Calu3 (cell line): ENCODE measurements at regions of chr1 and their contacts with region 1.

Region 1: DNA sequence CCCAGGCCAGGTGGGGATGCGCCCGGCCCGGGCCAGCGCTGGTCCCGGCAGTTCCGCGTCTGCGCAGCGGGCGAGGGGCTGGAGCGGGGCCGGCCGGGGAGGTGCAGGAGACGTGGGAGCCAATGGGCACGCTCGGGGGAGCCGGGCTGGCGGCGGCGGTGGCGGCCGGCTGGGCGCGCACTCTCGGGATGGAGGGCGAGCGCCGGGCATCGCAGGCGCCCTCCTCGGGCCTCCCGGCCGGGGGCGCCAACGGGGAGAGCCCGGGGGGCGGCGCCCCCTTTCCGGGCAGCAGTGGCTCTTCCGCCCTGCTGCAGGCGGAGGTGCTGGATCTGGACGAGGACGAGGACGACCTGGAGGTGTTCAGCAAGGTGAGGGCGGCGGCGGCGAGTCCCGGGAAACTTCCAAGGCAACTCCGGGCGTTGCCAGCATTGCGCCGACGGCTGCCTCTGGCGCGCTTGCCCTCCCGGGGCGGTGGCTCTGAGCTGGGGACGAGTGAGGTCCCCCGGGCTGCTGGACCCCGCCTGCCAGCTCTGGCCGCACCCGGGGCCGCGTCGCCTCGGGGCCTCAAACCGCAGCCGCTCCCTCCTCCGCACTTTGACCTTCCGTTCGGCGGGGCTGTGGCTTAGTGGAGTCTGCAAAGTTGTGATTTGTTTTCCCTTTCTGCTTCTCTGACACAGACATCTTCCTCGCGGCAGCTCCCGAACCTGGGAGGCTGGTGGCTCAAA is at the start of gene SNX7:
- DNase-seq: peak; percentile 84
- H3K4me3 Mint-ChIP-seq: peak within 1 kb of the TSS; percentile 80
- H3K27ac Mint-ChIP-seq: peak within 1 kb of the TSS; percentile 80
- H3K4me1 Mint-ChIP-seq: no peaks in the 10 kb centered on the region
- H3K27me3 Mint-ChIP-seq: no peaks in the 10 kb centered on the region
- CTCF ChIP-seq: peak; percentile 19
- total RNA-seq, gene SNX7: 22.2 and 22.8 TPM in 2 replicates

Region 2: DNA sequence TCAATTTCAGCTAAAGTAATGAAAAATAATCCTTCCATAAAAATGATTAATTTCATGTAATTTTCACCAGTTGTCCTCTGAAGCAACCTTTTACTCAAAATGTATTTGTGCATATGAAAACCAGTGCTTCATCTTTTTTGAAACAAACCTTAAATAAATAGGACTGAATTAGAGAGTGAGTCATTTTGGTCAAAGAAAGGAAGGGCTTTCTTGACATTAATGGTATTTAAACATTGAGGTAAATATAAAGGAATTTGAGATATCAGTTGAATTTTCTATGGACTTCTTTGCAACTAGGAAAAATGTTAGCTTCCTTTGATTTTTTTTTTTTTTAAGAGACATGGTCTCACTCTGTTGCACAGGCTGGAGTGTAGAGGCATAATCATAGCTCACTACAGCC is 38.5 kb after region 1 on chr1:
- CTCF ChIA-PET with region 1: no interaction called
- intact Hi-C with region 1: loop called (anchors 1 kb)
- DNase-seq: no peak
- H3K4me3 Mint-ChIP-seq: no peak overlapping the region
- H3K27ac Mint-ChIP-seq: no peak overlapping the region
- H3K4me1 Mint-ChIP-seq: no peaks in the 10 kb centered on the region
- H3K27me3 Mint-ChIP-seq: no peaks in the 10 kb centered on the region
- CTCF ChIP-seq: no peak

Region 3: DNA sequence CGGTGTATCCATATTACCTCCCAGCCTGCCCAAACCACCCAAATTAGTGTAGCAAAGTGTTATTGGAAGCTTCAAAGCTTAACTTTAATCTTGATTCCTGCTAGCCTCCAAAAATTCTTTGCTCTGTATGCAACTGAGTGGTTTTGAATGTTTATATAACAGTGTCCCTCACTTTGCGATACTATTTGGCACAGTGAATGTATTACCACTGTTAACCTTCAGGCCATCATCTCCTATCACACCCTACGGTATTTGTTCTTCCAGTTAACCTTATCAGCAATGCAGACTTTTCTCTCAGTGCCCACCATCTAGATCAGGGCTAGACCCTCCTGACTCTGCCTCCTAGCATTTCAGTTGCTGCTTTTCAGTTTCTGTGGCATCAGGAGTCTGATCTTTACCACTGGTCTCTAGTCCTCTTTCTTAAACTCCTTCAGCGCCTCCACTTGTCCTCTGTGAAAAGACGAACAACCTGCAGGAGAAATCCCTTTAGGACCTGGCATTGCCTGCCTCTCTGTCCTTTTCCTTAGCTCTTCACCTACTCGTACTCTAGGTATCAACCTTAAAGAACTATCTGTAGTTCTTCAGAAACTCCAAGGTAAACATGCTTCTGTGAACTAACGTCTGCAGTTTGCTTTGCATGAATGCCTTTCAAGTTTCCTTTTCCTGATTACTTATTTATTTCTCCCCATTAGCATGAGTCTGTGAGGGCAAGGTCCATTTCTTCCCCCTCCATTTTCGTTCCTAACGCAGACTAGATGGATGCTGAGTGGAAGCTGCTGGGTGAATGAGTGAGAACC is 71.5 kb after region 1 on chr1:
- CTCF ChIA-PET with region 1: no interaction called
- intact Hi-C with region 1: loop called (anchors 5 kb)
- DNase-seq: peak; percentile 6
- H3K4me3 Mint-ChIP-seq: peak overlapping the region; percentile 75
- H3K27ac Mint-ChIP-seq: peak overlapping the region; percentile 94
- H3K4me1 Mint-ChIP-seq: peaks cover 28% of the 10 kb centered on the region
- H3K27me3 Mint-ChIP-seq: no peaks in the 10 kb centered on the region
- CTCF ChIP-seq: no peak